B cell (primary cell): ENCODE measurements at regions of chr2 and their contacts with region 1.

Region 1: DNA sequence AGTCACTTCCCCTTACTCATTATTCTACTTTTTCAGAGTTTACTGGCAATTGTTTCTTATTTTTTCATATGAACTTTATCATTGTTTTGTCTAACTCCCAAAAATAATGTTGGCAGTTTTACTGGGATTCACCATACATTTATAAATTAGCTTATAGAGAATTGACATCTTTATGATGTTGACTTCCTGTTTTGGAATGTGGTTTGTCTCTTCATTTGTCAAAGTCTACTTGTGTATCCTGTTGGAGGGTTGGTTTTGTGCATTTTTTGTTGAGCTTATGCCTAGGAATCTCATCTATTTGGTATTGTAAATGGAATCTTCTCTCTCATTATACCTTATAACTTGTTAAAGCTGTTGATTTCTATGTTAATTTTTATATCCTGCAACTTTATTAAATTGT is 16.4 kb downstream of the EPC2 start:
- DNase-seq: no peak
- ATAC-seq: no peak
- H3K4me3 ChIP-seq: no peak overlapping the region
- H3K4me3 Mint-ChIP-seq: no peak overlapping the region
- H3K27ac ChIP-seq: no peak overlapping the region
- H3K27ac Mint-ChIP-seq: no peak overlapping the region
- H3K4me1 ChIP-seq: peaks cover 24 to 57% of the 10 kb centered on the region in 2 donors
- H3K4me1 Mint-ChIP-seq: peaks cover 66% of the 10 kb centered on the region
- H3K27me3 ChIP-seq: no peaks in the 10 kb centered on the region
- H3K27me3 Mint-ChIP-seq: no peaks in the 10 kb centered on the region
- CTCF ChIP-seq: no peak

Region 2: GRCh38 chr2:148614322-148615049 is 46.5 kb before region 1 on chr2:
- CTCF ChIA-PET with region 1: no interaction called
- POLR2A ChIA-PET with region 1: no interaction called
- intact Hi-C with region 1: no loop called
- DNase-seq: peak; percentile 59
- ATAC-seq: peak; percentile 83
- H3K4me3 ChIP-seq: no peak overlapping the region
- H3K4me3 Mint-ChIP-seq: peak overlapping the region; percentile 15
- H3K27ac ChIP-seq: peak overlapping the region; percentile 42 to 59
- H3K27ac Mint-ChIP-seq: peak overlapping the region; percentile 59
- H3K4me1 ChIP-seq: peaks cover 20 to 28% of the 10 kb centered on the region in 2 donors
- H3K4me1 Mint-ChIP-seq: peaks cover 20% of the 10 kb centered on the region
- H3K27me3 ChIP-seq: no peaks in the 10 kb centered on the region
- H3K27me3 Mint-ChIP-seq: no peaks in the 10 kb centered on the region
- CTCF ChIP-seq: no peak

Region 3: GRCh38 chr2:148627224-148627623 is 33.8 kb before region 1 on chr2:
- CTCF ChIA-PET with region 1: no interaction called
- POLR2A ChIA-PET with region 1: no interaction called
- intact Hi-C with region 1: no loop called
- DNase-seq: no peak
- ATAC-seq: no peak
- H3K4me3 ChIP-seq: no peak overlapping the region
- H3K4me3 Mint-ChIP-seq: no peak overlapping the region
- H3K27ac ChIP-seq: no peak overlapping the region
- H3K27ac Mint-ChIP-seq: no peak overlapping the region
- H3K4me1 ChIP-seq: no peaks in the 10 kb centered on the region
- H3K4me1 Mint-ChIP-seq: peaks cover 2% of the 10 kb centered on the region
- H3K27me3 ChIP-seq: no peaks in the 10 kb centered on the region
- H3K27me3 Mint-ChIP-seq: peaks cover 9% of the 10 kb centered on the region
- CTCF ChIP-seq: no peak

Region 4: DNA sequence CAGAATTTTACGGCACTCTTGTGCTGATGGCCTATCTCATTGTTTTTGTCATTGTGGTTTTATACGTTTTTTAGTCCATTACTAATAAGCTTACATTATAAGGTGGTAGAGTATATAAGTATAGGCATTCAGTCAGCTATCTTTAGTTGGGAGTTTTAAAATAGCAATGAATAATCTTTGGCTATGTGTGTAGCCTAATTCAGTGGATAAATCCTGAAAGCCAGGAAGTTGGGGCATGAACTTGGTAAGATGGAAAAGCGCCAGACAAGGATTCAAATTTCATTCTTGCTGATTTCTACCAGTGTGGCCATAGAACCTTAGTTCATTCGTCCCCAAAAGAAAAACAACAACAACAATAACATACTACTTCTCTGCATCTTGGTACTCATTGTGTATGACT is 14.7 kb after region 1 on chr2:
- CTCF ChIA-PET with region 1: no interaction called
- POLR2A ChIA-PET with region 1: no interaction called
- intact Hi-C with region 1: loop called (anchors 2 kb)
- DNase-seq: no peak
- ATAC-seq: no peak
- H3K4me3 ChIP-seq: no peak overlapping the region
- H3K4me3 Mint-ChIP-seq: no peak overlapping the region
- H3K27ac ChIP-seq: no peak overlapping the region
- H3K27ac Mint-ChIP-seq: no peak overlapping the region
- H3K4me1 ChIP-seq: peaks cover 8 to 15% of the 10 kb centered on the region in 2 donors
- H3K4me1 Mint-ChIP-seq: peaks cover 51% of the 10 kb centered on the region
- H3K27me3 ChIP-seq: no peaks in the 10 kb centered on the region
- H3K27me3 Mint-ChIP-seq: no peaks in the 10 kb centered on the region
- CTCF ChIP-seq: no peak